ENCODE measurements at regions of chr5 and their contacts with region 1.

Region 1: DNA sequence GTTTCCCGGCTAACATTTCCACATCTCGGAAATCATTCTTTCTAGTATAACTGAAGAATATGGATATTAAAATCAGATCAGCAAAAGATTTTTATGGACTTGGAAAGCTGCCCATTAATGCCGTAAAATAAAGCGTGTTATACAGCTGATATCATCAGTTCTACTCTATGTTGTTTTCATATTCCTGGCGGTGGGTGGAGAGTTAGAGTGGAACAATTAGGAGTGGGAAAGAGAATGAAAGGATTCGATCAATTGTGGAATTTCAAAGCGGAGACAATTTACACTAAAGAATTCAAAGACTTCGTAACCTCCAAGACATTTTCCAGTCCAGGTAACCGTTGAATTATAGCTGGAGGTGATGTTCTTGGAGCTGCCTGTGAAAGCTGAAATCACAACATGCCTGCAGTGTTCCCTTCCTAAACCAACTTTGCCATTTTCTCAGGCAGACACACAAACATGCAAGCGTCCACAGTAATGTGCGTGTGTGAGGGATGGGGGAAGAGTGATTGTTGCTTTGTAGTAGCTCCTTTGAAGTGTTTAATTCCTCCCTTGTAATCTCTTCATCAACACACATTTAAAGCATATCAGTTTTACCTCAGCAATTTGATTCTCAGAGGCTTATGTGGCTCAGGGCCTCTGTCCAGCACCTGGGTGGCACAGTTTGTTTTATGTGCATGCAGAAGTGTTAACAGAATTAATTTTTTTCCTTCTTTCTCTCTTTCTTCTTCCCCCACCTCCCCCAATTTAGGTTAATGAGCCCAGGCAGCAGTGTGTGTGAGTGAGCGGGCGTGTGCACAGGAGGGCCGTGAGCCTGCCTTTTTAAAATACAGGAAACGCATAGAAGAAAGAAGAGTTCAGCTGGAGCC is 544.1 kb downstream of the RAB3C start:
- DNase-seq: no peak
- H3K4me3 ChIP-seq: peak overlapping the region in 3 of 4 donors; percentile 27 to 35 (median 32)
- H3K27ac ChIP-seq: peak overlapping the region; percentile 73 to 85 (median 80)
- H3K4me1 ChIP-seq: peaks cover 0 to 64% (median 54%) of the 10 kb centered on the region in 4 donors
- H3K27me3 ChIP-seq: no peaks in the 10 kb centered on the region
- CTCF ChIP-seq: no peak
- EP300 ChIP-seq: no peak
- POLR2A ChIP-seq: no peak

Region 2: DNA sequence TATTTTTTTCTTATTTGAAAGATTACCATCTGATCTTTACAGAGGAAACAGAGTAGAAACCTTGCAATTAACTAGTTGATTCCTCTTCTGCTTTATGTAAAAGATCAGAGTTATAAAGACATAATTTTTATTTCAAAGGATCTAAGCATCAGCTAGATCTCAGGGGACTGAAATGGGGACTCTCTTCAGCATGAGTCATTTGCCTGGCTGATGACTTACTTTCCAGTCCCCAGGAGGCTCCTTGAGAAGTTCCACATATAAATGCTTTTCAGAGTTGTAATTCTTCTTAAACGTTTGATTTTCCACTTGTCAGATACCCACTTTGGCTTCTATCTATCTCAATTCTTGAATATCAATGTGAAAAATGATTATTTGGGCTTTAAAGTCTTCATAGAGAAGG is 154.6 kb before region 1 on chr5:
- intact Hi-C with region 1: no loop called
- DNase-seq: no peak
- H3K4me3 ChIP-seq: no peak overlapping the region
- H3K27ac ChIP-seq: no peak overlapping the region
- H3K4me1 ChIP-seq: peaks cover 0 to 8% (median 2%) of the 10 kb centered on the region in 4 donors
- H3K27me3 ChIP-seq: no peaks in the 10 kb centered on the region
- CTCF ChIP-seq: no peak
- EP300 ChIP-seq: no peak
- POLR2A ChIP-seq: no peak

Region 3: GRCh38 chr5:59093329-59093728 is 33.6 kb before region 1 on chr5:
- intact Hi-C with region 1: loop called (anchors 5 kb)
- DNase-seq: no peak
- H3K4me3 ChIP-seq: peak overlapping the region in 3 of 4 donors; percentile 14 to 21 (median 18)
- H3K27ac ChIP-seq: peak overlapping the region in 3 of 4 donors; percentile 60 to 74 (median 69)
- H3K4me1 ChIP-seq: peaks cover 0 to 86% (median 59%) of the 10 kb centered on the region in 4 donors
- H3K27me3 ChIP-seq: no peaks in the 10 kb centered on the region
- CTCF ChIP-seq: no peak
- EP300 ChIP-seq: no peak
- POLR2A ChIP-seq: no peak

Region 4: GRCh38 chr5:59367791-59368394 is 241.0 kb after region 1 on chr5:
- intact Hi-C with region 1: no loop called
- DNase-seq: peak; percentile 75
- H3K4me3 ChIP-seq: no peak overlapping the region
- H3K27ac ChIP-seq: peak overlapping the region in 3 of 4 donors; percentile 20 to 51 (median 41)
- H3K4me1 ChIP-seq: peaks cover 0 to 40% (median 12%) of the 10 kb centered on the region in 4 donors
- H3K27me3 ChIP-seq: no peaks in the 10 kb centered on the region
- CTCF ChIP-seq: peak; percentile 53 to 71 (median 64)
- EP300 ChIP-seq: no peak
- POLR2A ChIP-seq: no peak

Region 5: GRCh38 chr5:59449905-59450644 is 323.1 kb after region 1 on chr5:
- intact Hi-C with region 1: no loop called
- DNase-seq: no peak
- H3K4me3 ChIP-seq: no peak overlapping the region
- H3K27ac ChIP-seq: no peak overlapping the region
- H3K4me1 ChIP-seq: peaks cover 0 to 8% (median 0%) of the 10 kb centered on the region in 4 donors
- H3K27me3 ChIP-seq: no peaks in the 10 kb centered on the region
- CTCF ChIP-seq: no peak
- EP300 ChIP-seq: no peak
- POLR2A ChIP-seq: no peak